Activated T-helper 1 cell treated with anti-CD3 and anti-CD28 coated beads, Interleukin-12 subunit alpha, Interleukin-12 subunit beta, Interleukin-2, Interleukin-4 antibody, amounts not matched to agents 30 ng/mL and 10 ng/mL and 1 ng/mL, durations not matched to agents 14 hours and 24 hours and 36 hours (primary cell): ENCODE measurements at regions of chr3 and their contacts with region 1.

Region 1: GRCh38 chr3:27454914-27455313 is 29.3 kb downstream of the SLC4A7 start:
- DNase-seq: no peak
- H3K4me3 Mint-ChIP-seq: peak overlapping the region; percentile 1
- H3K27ac Mint-ChIP-seq: peak overlapping the region; percentile 85
- H3K4me1 Mint-ChIP-seq: peaks cover 33% of the 10 kb centered on the region
- H3K27me3 Mint-ChIP-seq: no peaks in the 10 kb centered on the region

Region 2: GRCh38 chr3:27228805-27229204 is 226.1 kb before region 1 on chr3:
- intact Hi-C with region 1: no loop called
- DNase-seq: no peak
- H3K4me3 Mint-ChIP-seq: no peak overlapping the region
- H3K27ac Mint-ChIP-seq: no peak overlapping the region
- H3K4me1 Mint-ChIP-seq: no peaks in the 10 kb centered on the region
- H3K27me3 Mint-ChIP-seq: no peaks in the 10 kb centered on the region

Region 3: GRCh38 chr3:27392950-27393679 is 61.8 kb before region 1 on chr3:
- intact Hi-C with region 1: loop called (anchors 5 kb)
- DNase-seq: no peak
- H3K4me3 Mint-ChIP-seq: no peak overlapping the region
- H3K27ac Mint-ChIP-seq: no peak overlapping the region
- H3K4me1 Mint-ChIP-seq: peaks cover 10% of the 10 kb centered on the region
- H3K27me3 Mint-ChIP-seq: no peaks in the 10 kb centered on the region

Region 4: DNA sequence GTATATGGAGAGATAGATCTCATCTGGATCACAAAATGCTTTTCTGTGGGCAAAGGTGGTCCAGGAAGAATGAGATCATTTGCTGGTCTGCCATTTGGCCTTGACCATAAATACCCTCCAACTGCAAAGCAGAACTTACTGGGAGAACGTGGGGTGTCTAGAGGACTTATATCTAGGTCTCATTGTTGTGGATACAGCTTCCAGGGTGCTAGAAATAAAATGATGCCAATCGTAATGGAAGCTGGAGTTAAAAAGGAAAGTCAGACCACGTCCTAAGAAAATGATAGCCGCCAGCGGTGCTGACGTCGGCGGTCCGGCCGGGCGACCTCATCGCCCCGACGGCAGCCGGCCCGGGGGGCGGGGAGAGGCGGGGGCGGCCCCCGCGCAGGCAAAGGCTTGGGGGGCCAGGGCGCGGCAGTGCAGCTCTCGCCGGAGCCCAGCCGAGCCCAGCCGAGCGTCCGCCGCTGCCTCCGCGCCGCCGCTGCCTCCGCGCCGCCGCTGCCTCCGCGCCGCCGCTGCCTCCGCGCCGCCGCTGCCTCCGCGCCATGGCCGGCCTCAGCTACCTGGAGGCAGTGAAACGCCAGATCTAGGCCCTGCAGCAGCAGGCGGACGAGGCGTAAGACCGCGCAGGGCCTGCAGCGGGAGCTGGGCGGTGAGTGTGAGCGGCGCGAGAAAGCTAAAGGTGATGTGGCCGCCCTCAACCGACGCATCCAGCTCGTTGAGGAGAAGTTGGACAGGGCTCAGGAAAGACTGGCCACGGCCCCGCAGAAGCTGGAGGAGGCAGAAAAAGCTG is 177.7 kb after region 1 on chr3:
- intact Hi-C with region 1: loop called (anchors 10 kb)
- DNase-seq: peak; percentile 25
- H3K4me3 Mint-ChIP-seq: peak overlapping the region; percentile 86
- H3K27ac Mint-ChIP-seq: peak overlapping the region; percentile 82
- H3K4me1 Mint-ChIP-seq: peaks cover 41% of the 10 kb centered on the region
- H3K27me3 Mint-ChIP-seq: no peaks in the 10 kb centered on the region